ENCODE measurements at regions of chr11 and their contacts with region 1.

Region 1: DNA sequence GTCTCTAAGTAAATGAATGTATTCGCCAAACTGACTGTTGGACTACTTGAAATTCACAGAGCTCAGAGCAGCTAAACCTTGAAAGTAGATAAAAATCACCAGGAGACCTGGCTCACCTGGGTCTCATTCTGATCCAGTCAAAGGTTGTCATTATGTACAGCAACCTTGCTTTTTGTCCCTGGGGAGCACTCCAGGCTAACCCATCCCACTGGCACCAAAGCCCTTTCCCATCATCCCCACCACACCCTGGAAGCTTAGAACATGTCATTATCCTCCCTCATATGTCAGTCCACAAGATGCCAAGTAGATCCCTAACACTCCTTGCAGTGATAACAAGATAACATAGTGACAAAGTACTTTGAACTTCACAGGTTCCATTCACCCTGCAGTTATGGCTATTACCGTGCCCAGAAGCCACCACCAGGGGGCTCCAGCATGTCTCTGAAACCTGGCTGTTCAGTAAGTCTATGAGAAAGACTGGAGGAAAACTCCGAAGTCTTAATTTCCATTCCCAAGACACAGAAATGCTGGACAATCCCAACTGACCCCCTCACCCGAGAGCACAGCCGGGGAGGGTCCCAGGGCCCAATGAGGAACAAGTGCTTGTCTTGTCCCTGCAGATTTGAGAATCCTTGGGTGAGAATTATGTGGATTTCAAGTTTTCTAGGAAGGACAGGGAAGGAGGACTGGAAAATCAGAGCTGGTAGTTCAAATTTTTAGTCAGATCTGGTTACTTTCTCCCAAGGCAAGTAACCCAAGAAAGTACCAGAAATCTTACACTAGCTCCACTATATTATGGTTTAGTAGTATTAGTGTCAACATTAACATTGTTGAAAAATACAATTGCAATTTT is 43.0 kb upstream of the USP47 start:
- DNase-seq: no peak
- H3K4me3 ChIP-seq: no peak overlapping the region
- CTCF ChIP-seq: peak; percentile 88

Region 2: GRCh38 chr11:11826260-11826659 is 27.4 kb after region 1 on chr11:
- CTCF ChIA-PET with region 1: interaction called, 13 read pairs
- POLR2A ChIA-PET with region 1: no interaction called
- DNase-seq: no peak
- H3K4me3 ChIP-seq: no peak overlapping the region
- CTCF ChIP-seq: no peak

Region 3: GRCh38 chr11:11841723-11842420 is 43.1 kb after region 1 on chr11 and contains the start of gene USP47:
- CTCF ChIA-PET with region 1: interaction called, 10 read pairs
- POLR2A ChIA-PET with region 1: no interaction called
- DNase-seq: no peak
- H3K4me3 ChIP-seq: peak within 1 kb of the TSS; percentile 79
- CTCF ChIP-seq: peak; percentile 70

Region 4: GRCh38 chr11:11876458-11876857 is 77.6 kb after region 1 on chr11:
- CTCF ChIA-PET with region 1: interaction called, 20 read pairs
- POLR2A ChIA-PET with region 1: no interaction called
- DNase-seq: no peak
- H3K4me3 ChIP-seq: no peak overlapping the region
- CTCF ChIP-seq: no peak

Region 5: DNA sequence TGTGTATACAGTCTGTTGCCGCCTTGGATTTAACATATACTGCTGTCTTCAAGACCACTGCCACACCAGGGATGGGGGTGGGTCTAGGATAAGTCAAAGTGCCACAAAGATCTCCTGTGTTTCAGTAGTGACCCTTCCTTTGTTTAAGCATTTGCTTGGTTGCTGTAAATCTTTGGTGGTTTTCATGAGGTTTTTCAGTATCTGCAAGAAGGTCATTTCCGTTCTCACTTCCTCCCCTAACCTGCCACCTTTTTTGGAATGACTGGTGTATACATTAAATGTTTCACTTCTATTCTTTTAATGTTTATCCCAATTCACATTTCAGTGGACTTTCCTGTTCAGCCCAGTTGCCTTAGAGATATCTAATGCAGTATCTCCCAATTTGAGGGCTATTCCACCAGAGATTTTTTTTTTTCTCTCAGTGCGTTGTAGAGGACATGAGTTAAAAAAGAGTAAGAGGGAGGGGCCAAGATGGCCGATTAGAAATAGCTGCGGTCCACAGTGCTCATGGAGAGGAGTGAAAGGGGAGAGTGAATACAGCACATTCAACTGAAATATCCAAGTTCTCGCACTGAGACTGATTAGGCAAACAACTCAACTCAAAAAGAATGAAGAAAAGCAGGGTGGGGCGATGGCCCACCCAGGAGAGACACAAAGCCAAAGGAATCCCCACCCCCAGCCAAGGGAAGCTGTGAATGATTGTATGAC is 86.1 kb after region 1 on chr11:
- CTCF ChIA-PET with region 1: interaction called, 16 read pairs
- POLR2A ChIA-PET with region 1: no interaction called
- DNase-seq: no peak
- H3K4me3 ChIP-seq: no peak overlapping the region
- CTCF ChIP-seq: no peak

Region 6: DNA sequence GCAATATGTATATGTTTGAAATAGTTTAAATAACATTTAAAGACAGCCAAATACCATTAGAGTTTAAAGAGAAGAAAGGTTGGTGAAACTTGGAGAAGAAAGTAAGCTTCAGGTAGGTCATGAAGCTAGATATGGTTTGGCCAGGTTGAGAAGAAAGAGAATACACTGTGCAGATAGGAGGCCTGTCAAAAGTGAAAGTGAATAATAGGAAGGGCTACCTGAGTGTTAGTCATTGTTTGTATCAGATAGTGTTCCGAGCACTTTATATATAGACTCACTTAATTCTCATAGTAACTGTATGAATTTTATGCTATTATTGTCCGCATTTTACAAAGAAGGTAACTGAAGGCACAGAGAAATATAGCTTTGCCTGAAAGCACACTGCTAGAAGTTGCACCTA is 99.8 kb after region 1 on chr11:
- CTCF ChIA-PET with region 1: interaction called, 11 read pairs
- POLR2A ChIA-PET with region 1: no interaction called
- DNase-seq: no peak
- H3K4me3 ChIP-seq: no peak overlapping the region
- CTCF ChIP-seq: no peak

Region 7: GRCh38 chr11:11931461-11932055 is 132.7 kb after region 1 on chr11:
- CTCF ChIA-PET with region 1: interaction called, 25 read pairs
- POLR2A ChIA-PET with region 1: no interaction called
- DNase-seq: no peak
- H3K4me3 ChIP-seq: no peak overlapping the region
- CTCF ChIP-seq: peak; percentile 40